Caco-2 (cell line): ENCODE measurements at regions of chr13 and their contacts with region 1.

Region 1: GRCh38 chr13:103358255-103358932 is 292.2 kb upstream of the SLC10A2 start:
- DNase-seq: peak in 1 of 2 experiments; percentile 38
- H3K4me3 ChIP-seq: no peak overlapping the region
- H3K4me3 Mint-ChIP-seq: peak overlapping the region; percentile 37
- H3K27ac Mint-ChIP-seq: no peak overlapping the region
- H3K4me1 ChIP-seq: peaks cover 27% of the 10 kb centered on the region
- H3K4me1 Mint-ChIP-seq: peaks cover 13% of the 10 kb centered on the region
- H3K27me3 ChIP-seq: no peaks in the 10 kb centered on the region
- H3K27me3 Mint-ChIP-seq: no peaks in the 10 kb centered on the region
- CTCF ChIP-seq: no peak

Region 2: DNA sequence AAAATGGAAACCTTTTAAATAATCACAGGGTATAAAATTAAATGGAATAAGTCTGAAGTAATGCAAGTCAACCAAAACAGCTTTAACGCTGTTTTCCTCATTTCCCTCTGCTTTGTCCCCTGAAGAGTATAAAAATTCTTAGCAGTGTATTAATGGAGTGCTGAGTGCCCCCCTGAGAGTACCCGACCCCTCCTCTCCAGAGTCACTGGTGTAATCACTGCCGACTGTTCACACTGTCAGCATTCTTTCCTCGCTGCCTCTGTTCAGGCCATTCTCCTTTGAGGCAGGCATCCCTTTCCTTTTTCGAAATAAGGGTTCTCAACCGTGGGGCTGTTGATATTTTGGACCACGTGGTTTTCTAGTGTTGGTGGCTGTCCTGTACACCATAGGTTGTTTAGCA is 145.2 kb before region 1 on chr13:
- CTCF ChIA-PET with region 1: no interaction called
- POLR2A ChIA-PET with region 1: no interaction called
- intact Hi-C with region 1: loop called (anchors 1 kb)
- DNase-seq: no peak
- H3K4me3 ChIP-seq: no peak overlapping the region
- H3K4me3 Mint-ChIP-seq: no peak overlapping the region
- H3K27ac Mint-ChIP-seq: no peak overlapping the region
- H3K4me1 ChIP-seq: peaks cover 20% of the 10 kb centered on the region
- H3K4me1 Mint-ChIP-seq: peaks cover 7% of the 10 kb centered on the region
- H3K27me3 ChIP-seq: no peaks in the 10 kb centered on the region
- H3K27me3 Mint-ChIP-seq: no peaks in the 10 kb centered on the region
- CTCF ChIP-seq: no peak